Right ventricle myocardium inferior (tissue), 1 donor: ENCODE measurements at regions of chr19 and their contacts with region 1.

Region 1: DNA sequence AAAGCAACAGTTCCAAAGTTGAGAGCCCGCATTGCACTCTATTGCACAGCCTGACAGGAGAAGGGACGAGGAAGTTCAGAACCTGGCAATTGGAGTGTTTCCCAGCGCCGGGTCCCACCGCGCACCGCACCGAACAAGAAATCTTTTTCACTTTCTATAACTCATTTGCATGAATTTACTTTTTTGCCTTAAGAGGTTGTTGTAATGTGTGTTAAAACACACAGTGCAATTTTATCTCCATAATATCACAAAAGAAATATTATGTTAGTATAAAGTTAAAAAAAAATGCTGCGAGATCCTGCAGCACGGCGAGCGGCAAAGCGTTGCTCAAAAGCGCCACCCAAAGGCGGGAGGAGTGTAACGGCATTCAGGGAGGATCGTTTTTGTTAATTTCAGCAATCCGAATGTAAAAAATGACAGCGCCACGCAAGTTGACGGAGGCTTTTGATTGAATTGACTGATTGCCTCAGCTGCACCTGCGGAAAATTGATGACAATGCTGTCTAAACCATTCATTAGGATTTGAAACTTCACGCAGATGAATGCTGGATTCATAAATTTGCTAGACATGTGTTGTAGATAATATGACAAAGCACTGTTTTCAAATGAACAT is 303.6 kb upstream of the ZNF507 start:
- DNase-seq: no peak
- ATAC-seq: no peak

Region 2: DNA sequence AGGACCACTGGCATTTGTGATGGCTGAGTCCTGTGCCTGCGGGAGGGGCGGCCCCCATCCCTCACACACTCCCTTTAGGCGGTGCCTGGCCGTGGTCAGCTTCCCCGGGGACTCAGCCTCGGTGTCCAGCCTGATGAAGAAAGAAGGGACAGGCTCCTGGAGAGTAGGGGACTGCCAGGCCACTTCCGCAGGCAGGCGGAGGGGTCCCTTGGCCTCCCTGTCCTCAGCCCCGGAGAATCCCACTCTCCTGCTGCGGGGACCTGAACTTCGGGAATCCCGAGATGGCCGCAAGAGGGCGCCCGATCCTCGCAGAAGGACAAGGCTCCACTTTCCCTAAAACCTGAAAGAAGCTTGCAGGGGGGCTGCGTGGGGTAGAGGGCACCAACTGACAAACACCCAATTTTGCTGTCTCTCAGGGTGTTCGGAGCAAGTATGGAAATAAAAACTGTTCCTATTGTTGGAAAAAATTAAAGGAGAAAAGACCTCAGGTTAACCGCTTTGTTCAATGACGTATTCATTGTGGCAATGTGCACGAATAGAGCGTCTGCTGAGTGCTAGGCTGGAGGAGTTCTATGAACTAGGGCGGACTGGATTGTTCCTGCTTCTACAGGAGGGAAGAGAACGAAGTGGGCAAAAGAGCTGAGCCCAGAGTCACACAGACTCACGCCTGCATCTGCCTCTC is 1372.3 kb before region 1 on chr19:
- intact Hi-C with region 1: loop called (anchors 10 kb)
- DNase-seq: peak; percentile 84
- ATAC-seq: no peak

Region 3: DNA sequence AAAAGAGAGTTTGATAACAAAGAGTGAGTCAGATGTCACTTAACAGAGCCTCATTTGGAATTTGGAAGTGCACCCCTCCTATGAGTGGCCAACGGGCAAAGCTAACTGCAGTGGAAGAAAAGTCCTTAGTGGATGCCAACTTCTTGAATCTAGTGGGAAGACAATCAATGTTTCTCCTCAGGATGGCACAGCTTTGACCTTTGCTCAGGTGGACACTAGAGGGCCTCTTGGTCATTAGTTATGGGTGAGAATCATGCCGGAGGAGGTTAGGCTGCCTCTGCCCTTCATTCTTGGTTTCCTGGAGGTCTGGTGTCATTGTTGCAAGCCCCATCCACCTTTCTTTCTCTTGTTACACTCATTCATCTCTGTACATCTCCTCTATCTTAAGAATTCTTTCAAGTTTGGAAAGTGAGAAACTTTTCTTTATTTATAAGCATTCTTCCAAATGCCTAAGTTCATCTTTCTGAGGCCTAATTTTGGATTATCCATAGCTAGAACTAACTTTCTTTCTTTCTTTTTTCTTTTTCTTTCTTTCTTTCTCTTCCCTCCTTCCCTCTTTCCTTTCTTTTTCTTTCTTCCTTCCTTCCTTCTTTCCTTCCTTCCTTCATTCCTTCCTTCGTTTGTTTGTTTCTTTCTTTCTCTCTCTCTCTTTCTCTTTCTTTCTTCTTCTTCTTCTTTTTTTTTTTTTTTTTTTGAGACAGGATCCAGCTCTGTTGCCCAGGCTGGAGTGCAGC is 365.3 kb before region 1 on chr19:
- intact Hi-C with region 1: loop called (anchors 1 kb)
- DNase-seq: no peak
- ATAC-seq: no peak

Region 4: DNA sequence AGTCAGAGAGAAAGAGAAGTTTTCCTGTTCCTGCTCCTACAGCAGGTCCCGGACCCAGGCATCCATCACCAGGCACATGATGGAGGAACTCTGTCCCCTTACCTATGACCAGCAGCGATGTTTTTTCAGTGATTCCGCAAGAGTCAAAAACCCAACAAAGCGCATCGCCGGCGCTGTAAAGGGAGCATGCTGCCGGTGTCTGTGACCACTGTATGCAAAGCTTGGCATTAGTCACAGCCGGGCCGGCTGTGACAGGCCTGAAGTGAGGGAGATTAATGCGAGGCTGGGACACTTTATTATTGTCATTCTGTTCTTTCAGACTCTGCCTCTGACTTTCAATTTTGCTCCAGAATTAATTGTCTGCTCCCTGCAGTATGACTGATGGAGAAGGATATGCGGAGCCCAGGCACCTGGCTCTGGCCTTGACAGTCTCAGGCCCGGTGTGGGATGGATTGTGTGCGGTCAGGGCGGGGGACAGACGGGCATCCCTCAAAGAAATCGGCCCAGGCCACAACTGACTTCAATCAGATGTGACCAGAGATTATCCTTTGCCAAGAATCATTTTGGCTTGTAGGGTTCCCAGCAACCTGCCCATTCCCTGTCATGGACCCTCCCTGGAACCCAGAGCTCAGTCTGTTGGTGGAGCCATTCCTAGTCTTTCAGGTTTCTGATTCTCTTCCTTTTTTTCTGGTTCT is 158.3 kb before region 1 on chr19:
- intact Hi-C with region 1: loop called (anchors 2 kb)
- DNase-seq: no peak
- ATAC-seq: no peak

Region 5: DNA sequence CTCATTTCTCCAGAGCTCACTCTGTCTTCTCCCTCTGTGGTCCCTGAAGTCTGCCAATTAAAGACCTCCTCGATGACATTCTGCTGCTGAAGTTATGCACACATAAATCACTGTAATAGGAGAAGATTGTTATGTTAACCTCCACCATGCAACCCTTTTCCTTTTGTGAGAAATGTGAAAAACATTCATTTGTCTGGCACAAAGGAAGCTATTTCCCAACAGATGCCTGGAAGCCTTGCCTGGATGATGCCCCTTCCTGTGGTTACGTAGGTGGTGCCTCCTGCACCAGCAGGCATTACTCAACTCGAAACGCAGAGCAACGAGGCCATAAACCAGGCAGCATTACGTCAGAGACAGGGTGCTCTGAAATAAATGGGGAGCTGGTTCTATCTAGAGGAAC is 23.8 kb before region 1 on chr19:
- intact Hi-C with region 1: no loop called
- DNase-seq: no peak
- ATAC-seq: no peak